Psoas muscle (tissue), 8 donors: ENCODE measurements at regions of chr19 and their contacts with region 1.

Region 1: DNA sequence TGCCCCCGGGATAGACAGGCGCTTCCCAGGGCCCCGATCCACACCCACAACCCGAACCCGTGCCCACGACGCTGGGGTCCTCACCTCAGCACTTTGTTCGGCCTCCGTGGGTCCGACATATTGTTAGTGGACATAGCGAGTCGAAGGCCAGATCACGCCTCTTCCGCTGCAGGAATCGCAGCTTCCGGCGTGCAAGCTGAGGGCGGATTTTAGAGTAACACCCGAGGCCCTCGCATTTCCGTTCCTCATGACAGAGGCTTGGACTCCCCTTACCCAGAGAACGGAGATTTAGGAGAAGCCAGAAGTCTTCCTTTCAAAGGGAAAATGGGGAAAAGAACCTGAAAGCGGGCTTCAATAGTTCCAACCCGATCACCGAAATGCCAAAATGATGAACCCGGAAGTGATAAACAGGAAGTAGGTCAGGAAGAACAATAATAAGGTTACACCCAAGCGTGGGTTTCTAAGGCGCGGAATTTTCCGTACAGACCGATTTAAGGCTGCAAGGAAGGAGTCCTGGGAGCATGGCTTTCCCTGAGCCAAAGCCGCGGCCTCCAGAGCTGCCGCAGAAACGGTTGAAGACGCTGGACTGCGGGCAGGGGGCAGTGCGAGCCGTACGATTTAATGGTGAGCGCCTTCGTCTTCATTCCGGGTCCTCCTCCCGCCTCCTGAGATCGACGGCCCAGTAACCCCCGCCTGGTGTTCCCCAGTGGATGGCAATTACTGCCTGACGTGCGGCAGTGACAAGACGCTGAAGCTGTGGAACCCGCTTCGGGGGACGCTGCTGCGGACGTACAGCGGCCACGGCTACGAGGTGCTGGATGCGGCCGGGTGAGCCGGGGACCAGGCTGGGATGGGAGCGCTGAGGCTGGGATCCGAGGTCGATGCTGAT is 2.9 kb downstream of the WDR83 start:
- DNase-seq: peak; percentile 79 to 90
- ATAC-seq: peak; percentile 64 to 81 (median 78)
- H3K4me3 ChIP-seq: peak overlapping the region; percentile 98
- H3K27ac ChIP-seq: peak overlapping the region; percentile 98
- H3K4me1 ChIP-seq: peaks cover 33% of the 10 kb centered on the region
- H3K27me3 ChIP-seq: no peaks in the 10 kb centered on the region
- CTCF ChIP-seq: no peak

Region 2: DNA sequence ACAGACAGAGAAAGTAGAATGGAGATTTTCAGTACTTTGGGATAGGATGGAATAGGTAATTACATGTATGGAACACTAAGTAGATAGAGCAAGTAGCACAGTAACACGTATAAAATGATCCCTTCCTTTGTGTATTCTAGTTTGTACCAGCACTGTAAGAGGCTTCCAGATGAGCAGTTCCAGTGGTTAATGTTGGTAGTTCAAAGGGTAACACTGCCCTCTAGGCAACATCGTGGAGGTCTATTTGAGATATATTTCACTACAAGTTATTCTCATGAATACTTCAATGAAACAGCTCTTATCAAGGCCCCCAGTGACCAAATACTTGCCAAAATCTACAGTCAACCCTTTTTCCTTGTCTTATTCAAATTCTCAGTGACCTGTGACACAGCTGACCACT is 322.6 kb before region 1 on chr19:
- intact Hi-C with region 1: no loop called
- DNase-seq: no peak
- ATAC-seq: no peak
- H3K4me3 ChIP-seq: no peak overlapping the region
- H3K27ac ChIP-seq: no peak overlapping the region
- H3K4me1 ChIP-seq: no peaks in the 10 kb centered on the region
- H3K27me3 ChIP-seq: no peaks in the 10 kb centered on the region
- CTCF ChIP-seq: no peak

Region 3: DNA sequence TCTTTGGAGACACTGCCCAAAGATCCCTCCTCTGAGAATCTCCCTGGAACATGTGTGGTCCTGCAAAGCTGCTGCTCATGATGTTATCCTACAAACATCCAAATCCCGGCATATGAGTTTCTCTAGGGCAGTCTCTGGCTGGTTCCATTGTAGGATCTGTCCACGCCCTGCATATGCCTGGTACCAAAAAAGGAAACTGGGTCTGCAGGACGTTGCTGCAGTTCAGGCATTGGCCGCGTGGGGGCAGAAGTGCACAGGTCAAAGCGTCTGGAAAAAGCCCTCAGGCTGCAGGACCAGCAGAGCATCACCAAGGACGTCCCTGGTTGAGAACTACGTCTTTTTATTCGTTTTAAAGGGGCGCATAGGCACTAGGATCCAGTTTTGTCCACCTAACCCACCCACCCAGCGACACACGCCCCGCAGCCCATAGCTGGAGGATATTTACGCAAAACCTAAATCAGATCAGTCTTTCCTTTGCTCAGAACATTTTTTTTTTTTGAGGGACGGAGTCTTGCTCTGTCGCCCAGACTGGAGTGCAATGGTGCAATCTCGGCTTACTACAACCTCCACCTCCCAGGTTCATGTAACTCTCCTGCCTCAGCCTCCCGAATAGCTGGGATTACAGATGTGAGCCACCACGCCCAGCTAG is 105.4 kb before region 1 on chr19:
- intact Hi-C with region 1: loop called (anchors 5 to 10 kb)
- DNase-seq: peak; percentile 86 to 91
- ATAC-seq: peak; percentile 85 to 96 (median 86)
- H3K4me3 ChIP-seq: no peak overlapping the region
- H3K27ac ChIP-seq: no peak overlapping the region
- H3K4me1 ChIP-seq: no peaks in the 10 kb centered on the region
- H3K27me3 ChIP-seq: no peaks in the 10 kb centered on the region
- CTCF ChIP-seq: peak; percentile 92

Region 4: GRCh38 chr19:12716861-12717260 is 47.3 kb after region 1 on chr19:
- intact Hi-C with region 1: no loop called
- DNase-seq: no peak
- ATAC-seq: peak in 3 of 4 donors; percentile 33 to 45 (median 36)
- H3K4me3 ChIP-seq: no peak overlapping the region
- H3K27ac ChIP-seq: no peak overlapping the region
- H3K4me1 ChIP-seq: peaks cover 27% of the 10 kb centered on the region
- H3K27me3 ChIP-seq: no peaks in the 10 kb centered on the region
- CTCF ChIP-seq: peak; percentile 31